ENCODE measurements at regions of chr2 and their contacts with region 1.

Region 1: GRCh38 chr2:118003396-118003824 is 10.5 kb downstream of the CCDC93 start:
- DNase-seq: peak; percentile 69
- H3K4me3 ChIP-seq: no peak overlapping the region
- H3K27ac ChIP-seq: no peak overlapping the region
- H3K27me3 ChIP-seq: no peaks in the 10 kb centered on the region
- CTCF ChIP-seq: peak; percentile 89

Region 2: GRCh38 chr2:117814417-117815264 is 188.8 kb before region 1 on chr2 and contains the start of gene DDX18:
- CTCF ChIA-PET with region 1: interaction called, 267 read pairs
- POLR2A ChIA-PET with region 1: interaction called, 4 read pairs
- DNase-seq: peak; percentile 95
- H3K4me3 ChIP-seq: peak within 1 kb of the TSS; percentile 94
- H3K27ac ChIP-seq: peak within 1 kb of the TSS; percentile 79
- H3K27me3 ChIP-seq: no peaks in the 10 kb centered on the region
- CTCF ChIP-seq: peak; percentile 100
- polyA plus RNA-seq, gene DDX18: 42.1 and 53.5 TPM in 2 replicates

Region 3: DNA sequence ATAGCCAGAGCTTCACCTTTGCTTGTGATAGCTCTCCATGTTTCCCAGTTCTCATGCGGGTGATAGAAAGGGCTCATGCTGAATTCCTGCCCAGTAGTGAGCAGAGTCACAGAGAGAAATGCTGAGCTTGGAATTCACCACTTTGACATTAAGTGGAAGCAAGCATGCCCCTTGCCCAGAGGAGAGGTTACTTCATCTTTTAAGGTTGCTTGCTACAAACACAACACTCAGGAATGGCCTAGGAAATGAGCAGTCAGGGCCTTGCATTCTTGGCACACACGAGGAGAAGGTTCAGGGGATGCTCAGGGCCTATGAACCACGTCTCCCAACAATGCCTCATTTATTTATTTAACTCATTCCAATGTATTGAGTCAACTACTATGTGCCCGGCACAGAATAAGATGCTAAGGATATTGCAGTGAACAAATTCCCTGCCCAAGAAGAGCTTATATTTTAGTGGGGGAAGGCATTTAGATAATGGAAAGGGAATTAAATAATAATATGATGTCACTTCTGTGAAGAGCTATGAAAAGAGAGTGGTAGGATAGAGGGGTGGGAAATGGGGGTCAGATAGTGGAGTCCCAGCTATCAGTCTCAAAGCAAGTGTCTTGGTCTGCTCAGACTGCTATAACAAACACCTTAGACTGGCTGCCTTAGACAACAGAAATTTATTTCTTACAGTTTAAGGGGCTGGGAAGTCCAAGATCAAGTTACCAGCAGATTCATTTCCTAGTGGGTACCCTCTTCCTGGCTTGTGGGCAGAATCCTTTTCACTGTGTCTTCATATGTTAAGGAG is 146.8 kb before region 1 on chr2:
- CTCF ChIA-PET with region 1: interaction called, 21 read pairs
- POLR2A ChIA-PET with region 1: interaction called, 3 read pairs
- DNase-seq: peak; percentile 88
- H3K4me3 ChIP-seq: no peak overlapping the region
- H3K27ac ChIP-seq: peak overlapping the region; percentile 80
- H3K27me3 ChIP-seq: peaks cover 3% of the 10 kb centered on the region
- CTCF ChIP-seq: no peak

Region 4: GRCh38 chr2:117948615-117949014 is 54.8 kb before region 1 on chr2:
- CTCF ChIA-PET with region 1: interaction called, 40 read pairs
- POLR2A ChIA-PET with region 1: no interaction called
- DNase-seq: no peak
- H3K4me3 ChIP-seq: no peak overlapping the region
- H3K27ac ChIP-seq: no peak overlapping the region
- H3K27me3 ChIP-seq: no peaks in the 10 kb centered on the region
- CTCF ChIP-seq: no peak

Region 5: GRCh38 chr2:117980783-117981676 is 22.4 kb before region 1 on chr2:
- CTCF ChIA-PET with region 1: interaction called, 154 read pairs
- POLR2A ChIA-PET with region 1: no interaction called
- DNase-seq: peak; percentile 49
- H3K4me3 ChIP-seq: no peak overlapping the region
- H3K27ac ChIP-seq: peak overlapping the region; percentile 87
- H3K27me3 ChIP-seq: no peaks in the 10 kb centered on the region
- CTCF ChIP-seq: no peak

Region 6: GRCh38 chr2:118046634-118047210 is 43.3 kb after region 1 on chr2:
- CTCF ChIA-PET with region 1: interaction called, 12 read pairs
- POLR2A ChIA-PET with region 1: no interaction called
- DNase-seq: no peak
- H3K4me3 ChIP-seq: no peak overlapping the region
- H3K27ac ChIP-seq: no peak overlapping the region
- H3K27me3 ChIP-seq: no peaks in the 10 kb centered on the region
- CTCF ChIP-seq: peak; percentile 67